ENCODE measurements at regions of chr11 and their contacts with region 1.

Region 1: GRCh38 chr11:61129639-61130523 is 27.6 kb downstream of the CD5 start:
- DNase-seq: peak; percentile 91 to 94 (median 94)
- ATAC-seq: peak; percentile 98
- H3K4me3 ChIP-seq: no peak overlapping the region
- H3K27ac ChIP-seq: no peak overlapping the region; the same call in 2 of the 3 replicates
- H3K4me1 ChIP-seq: peaks cover 0 to 20% of the 10 kb centered on the region in 2 experiments; a peak in 2 of 5 replicates
- H3K27me3 ChIP-seq: peaks cover 16 to 23% of the 10 kb centered on the region in 2 experiments
- CTCF ChIP-seq: peak; percentile 100
- EP300 ChIP-seq: peak; percentile 30; the same call in 1 of the 2 replicates
- POLR2A ChIP-seq: no peak; the same call in 1 of the 2 replicates
- RAD21 ChIP-seq: peak; percentile 98 to 99

Region 2: GRCh38 chr11:60775420-60775961 is 354.4 kb before region 1 on chr11:
- CTCF ChIA-PET with region 1: interaction called, 4 read pairs
- POLR2A ChIA-PET with region 1: no interaction called
- in situ Hi-C with region 1: no loop called
- intact Hi-C with region 1: loop called (anchors 5 kb)
- DNase-seq: peak; percentile 75 to 86 (median 78)
- ATAC-seq: peak; percentile 95
- H3K4me3 ChIP-seq: no peak overlapping the region
- H3K27ac ChIP-seq: no peak overlapping the region
- H3K4me1 ChIP-seq: peaks cover 0 to 10% of the 10 kb centered on the region in 2 experiments; a peak in 1 of 5 replicates
- H3K27me3 ChIP-seq: peaks cover 15 to 40% of the 10 kb centered on the region in 2 experiments; a peak in 4 of 5 replicates
- CTCF ChIP-seq: peak; percentile 87 to 94 (median 90)
- EP300 ChIP-seq: no peak
- POLR2A ChIP-seq: no peak
- RAD21 ChIP-seq: peak; percentile 83 to 86

Region 3: GRCh38 chr11:60970369-60970774 is 159.5 kb before region 1 on chr11:
- CTCF ChIA-PET with region 1: interaction called, 14 read pairs
- POLR2A ChIA-PET with region 1: no interaction called
- in situ Hi-C with region 1: no loop called
- intact Hi-C with region 1: loop called (anchors 1 kb)
- DNase-seq: peak; percentile 64 to 70 (median 70)
- ATAC-seq: peak; percentile 97
- H3K4me3 ChIP-seq: no peak overlapping the region
- H3K27ac ChIP-seq: no peak overlapping the region
- H3K4me1 ChIP-seq: peaks cover 0 to 4% of the 10 kb centered on the region in 2 experiments; a peak in 1 of 5 replicates
- H3K27me3 ChIP-seq: peaks cover 24 to 57% of the 10 kb centered on the region in 2 experiments
- CTCF ChIP-seq: peak; percentile 79 to 91 (median 88)
- EP300 ChIP-seq: no peak
- POLR2A ChIP-seq: no peak
- RAD21 ChIP-seq: peak; percentile 73 to 83

Region 4: DNA sequence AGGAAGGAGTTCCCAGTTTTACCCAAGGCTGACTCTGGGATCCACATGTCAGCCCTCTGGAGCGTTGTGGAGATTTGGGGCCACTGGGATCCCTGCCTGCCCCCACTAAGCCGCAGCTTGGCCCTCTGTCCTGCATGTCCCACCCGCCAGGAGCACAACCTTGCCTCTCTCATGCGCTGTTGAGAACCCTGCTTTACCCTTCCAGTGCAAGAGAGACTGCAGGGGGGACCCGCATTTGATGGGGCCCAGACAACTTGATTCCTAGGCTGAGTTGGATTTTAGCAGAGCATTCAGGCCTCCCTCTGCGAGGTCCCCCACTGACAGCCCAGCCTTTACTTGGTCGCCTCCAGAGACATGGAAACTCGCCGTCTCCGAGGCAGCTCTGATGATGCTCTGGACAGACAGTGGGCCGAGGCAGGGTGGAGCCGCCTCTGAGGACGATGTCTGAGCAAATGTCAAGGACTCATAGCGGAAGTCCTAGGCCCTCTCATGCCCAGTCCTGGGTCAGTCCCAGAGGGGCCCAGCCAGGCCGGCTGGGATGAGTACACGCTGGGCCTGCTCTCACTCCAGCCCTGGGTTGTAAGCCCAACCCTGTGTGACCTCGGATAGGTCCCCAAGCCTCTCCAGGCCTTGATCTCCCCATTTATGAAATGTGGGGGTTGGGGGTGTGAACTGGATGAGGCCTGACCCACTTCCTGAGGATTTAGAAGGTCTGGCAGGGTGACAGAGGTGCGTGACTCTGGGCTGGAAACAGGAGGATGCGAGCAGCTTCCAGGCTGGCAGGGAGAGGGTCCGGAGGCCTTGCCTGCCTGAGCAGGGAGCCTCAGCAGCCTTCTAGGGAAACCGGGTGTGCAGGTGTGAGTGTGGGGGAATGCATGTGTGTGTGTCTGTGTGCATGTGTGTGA is 27.0 kb before region 1 on chr11:
- CTCF ChIA-PET with region 1: no interaction called
- POLR2A ChIA-PET with region 1: no interaction called
- in situ Hi-C with region 1: no loop called
- intact Hi-C with region 1: no loop called
- DNase-seq: no peak
- ATAC-seq: peak; percentile 29
- H3K4me3 ChIP-seq: no peak overlapping the region
- H3K27ac ChIP-seq: no peak overlapping the region
- H3K4me1 ChIP-seq: peaks cover 0 to 9% of the 10 kb centered on the region in 2 experiments; a peak in 1 of 5 replicates
- H3K27me3 ChIP-seq: peaks cover 11 to 39% of the 10 kb centered on the region in 2 experiments; a peak in 4 of 5 replicates
- CTCF ChIP-seq: no peak
- EP300 ChIP-seq: no peak
- POLR2A ChIP-seq: no peak
- RAD21 ChIP-seq: no peak

Region 5: DNA sequence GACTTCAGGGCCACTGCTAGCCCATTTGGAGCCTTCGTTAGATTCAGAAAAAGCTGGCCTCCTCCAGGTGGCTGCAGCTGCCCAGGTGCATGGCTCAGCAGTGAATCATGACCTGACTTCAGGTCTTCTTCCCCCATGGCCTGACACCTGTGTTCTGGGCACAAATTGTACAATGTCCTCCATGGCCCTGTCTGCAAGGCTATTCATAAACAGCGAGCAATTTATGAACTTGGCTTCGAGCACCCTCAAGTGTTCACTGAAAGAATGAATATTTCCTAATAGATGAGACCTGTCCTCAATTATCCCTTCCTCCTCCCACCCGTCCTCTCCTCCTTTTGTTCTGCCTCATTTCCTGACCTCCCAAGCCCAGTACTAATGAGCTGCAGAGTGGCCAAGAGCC is 43.6 kb after region 1 on chr11:
- CTCF ChIA-PET with region 1: interaction called, 17 read pairs
- POLR2A ChIA-PET with region 1: interaction called, 3 read pairs
- in situ Hi-C with region 1: no loop called
- intact Hi-C with region 1: loop called (anchors 1 kb)
- DNase-seq: peak in 3 of 4 experiments; percentile 21 to 57 (median 46)
- ATAC-seq: peak; percentile 89
- H3K4me3 ChIP-seq: no peak overlapping the region
- H3K27ac ChIP-seq: no peak overlapping the region
- H3K4me1 ChIP-seq: no peaks in the 10 kb centered on the region; a peak in 1 of 5 replicates
- H3K27me3 ChIP-seq: peaks cover 26 to 45% of the 10 kb centered on the region in 2 experiments
- CTCF ChIP-seq: peak; percentile 64 to 79 (median 75)
- EP300 ChIP-seq: no peak
- POLR2A ChIP-seq: no peak
- RAD21 ChIP-seq: peak; percentile 44 to 83

Region 6: DNA sequence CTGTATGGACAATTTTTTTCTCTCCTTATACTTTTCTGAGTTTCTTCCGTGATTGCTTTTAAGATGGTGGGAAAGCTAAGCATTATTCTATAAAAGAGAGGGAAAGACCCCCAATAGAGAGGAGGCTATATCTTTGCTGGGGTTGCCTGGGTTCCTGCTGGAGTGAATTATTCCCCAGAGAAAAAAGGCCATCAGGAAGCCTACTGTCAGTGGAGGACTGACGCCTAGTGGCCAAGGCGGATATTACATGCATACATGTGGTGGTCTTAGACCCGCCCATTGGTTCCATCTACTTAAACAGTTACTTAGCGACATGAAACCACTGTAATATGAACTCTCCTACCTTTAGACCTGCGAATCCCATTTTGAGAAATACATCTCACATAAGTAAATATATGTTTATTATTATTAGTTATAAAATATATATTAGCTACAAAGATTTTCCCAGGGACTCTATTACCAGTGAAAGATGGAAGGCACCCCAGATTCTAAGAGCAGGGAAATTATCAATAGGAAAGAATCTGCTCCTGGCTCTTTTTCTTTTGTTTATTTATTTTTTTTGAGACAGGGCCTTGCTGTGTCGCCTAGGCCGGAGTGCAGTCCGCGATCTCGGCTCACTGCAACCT is 57.7 kb after region 1 on chr11:
- CTCF ChIA-PET with region 1: interaction called, 19 read pairs
- POLR2A ChIA-PET with region 1: no interaction called
- in situ Hi-C with region 1: no loop called
- intact Hi-C with region 1: loop called (anchors 1 kb)
- DNase-seq: peak; percentile 73 to 86 (median 80)
- ATAC-seq: peak; percentile 96
- H3K4me3 ChIP-seq: no peak overlapping the region
- H3K27ac ChIP-seq: no peak overlapping the region
- H3K4me1 ChIP-seq: no peaks in the 10 kb centered on the region; a peak in 1 of 5 replicates
- H3K27me3 ChIP-seq: peaks cover 7 to 9% of the 10 kb centered on the region in 2 experiments; a peak in 3 of 5 replicates
- CTCF ChIP-seq: peak; percentile 92 to 94 (median 94)
- EP300 ChIP-seq: no peak
- POLR2A ChIP-seq: no peak
- RAD21 ChIP-seq: peak; percentile 77 to 88

Region 7: DNA sequence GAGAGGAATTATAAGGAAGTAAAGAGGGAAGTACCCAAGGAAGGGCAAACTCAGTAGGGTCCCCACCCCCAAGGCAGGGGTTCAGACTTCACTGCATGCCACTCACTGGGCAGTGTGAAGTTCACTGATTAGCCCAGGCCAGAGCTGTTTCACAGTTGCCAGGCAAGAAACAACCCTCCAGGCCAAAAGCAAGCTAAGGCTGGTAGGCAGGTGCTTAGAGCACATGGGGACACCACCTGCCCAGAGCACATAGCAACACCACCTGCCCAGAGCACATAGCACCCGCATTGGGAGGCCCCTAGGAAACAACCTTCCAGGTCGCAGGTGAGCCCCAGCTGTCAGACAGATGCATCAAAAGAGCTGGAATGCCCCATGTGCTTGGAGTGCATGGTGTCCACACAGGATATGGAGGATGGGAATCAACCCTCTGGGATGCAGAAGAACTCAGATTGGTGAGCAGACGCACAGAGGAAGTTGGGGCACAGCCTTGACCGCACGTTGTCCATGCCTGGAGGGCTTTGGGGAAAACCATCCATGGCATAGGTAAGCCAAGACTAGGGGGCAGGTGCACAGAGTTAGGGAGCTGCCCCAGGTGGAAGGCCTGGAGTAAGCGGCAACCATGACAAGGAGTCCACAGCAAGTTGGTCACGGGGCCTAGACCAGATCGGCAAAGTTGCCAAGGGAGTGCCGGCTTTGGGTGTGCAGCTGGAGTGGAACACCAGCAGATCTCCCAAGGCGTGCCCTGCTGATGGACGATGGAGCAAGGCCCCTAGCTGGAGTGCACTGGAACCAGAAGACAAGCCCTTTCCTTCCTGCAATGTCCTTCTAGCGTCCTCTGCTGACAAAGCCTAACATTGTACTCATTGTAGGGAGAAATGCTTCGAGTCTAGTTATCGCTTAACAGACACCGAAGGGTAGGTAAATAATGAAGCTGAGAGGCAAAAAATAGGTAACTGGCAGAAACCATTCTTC is 254.7 kb after region 1 on chr11:
- CTCF ChIA-PET with region 1: interaction called, 4 read pairs
- POLR2A ChIA-PET with region 1: no interaction called
- in situ Hi-C with region 1: no loop called
- intact Hi-C with region 1: loop called (anchors 5 kb)
- DNase-seq: peak; percentile 36 to 82 (median 54)
- ATAC-seq: peak; percentile 95
- H3K4me3 ChIP-seq: no peak overlapping the region
- H3K27ac ChIP-seq: no peak overlapping the region
- H3K4me1 ChIP-seq: peaks cover 3 to 6% of the 10 kb centered on the region in 2 experiments; a peak in 2 of 5 replicates
- H3K27me3 ChIP-seq: no peaks in the 10 kb centered on the region
- CTCF ChIP-seq: peak; percentile 84 to 97 (median 91)
- EP300 ChIP-seq: no peak
- POLR2A ChIP-seq: no peak
- RAD21 ChIP-seq: peak; percentile 89 to 98